ENCODE measurements at regions of chr6 and their contacts with region 1.

Region 1: GRCh38 chr6:130020907-130021629 is 2.7 kb downstream of the L3MBTL3 start:
- DNase-seq: peak; percentile 91
- ATAC-seq: peak; percentile 59
- H3K4me3 ChIP-seq: peak overlapping the region; percentile 70 to 77 (median 73)
- H3K4me3 Mint-ChIP-seq: peak overlapping the region; percentile 99
- H3K27ac ChIP-seq: peak overlapping the region; percentile 59 to 82
- H3K27ac Mint-ChIP-seq: peak overlapping the region; percentile 99
- H3K4me1 ChIP-seq: peaks cover 10% of the 10 kb centered on the region in 2 donors
- H3K4me1 Mint-ChIP-seq: peaks cover 29% of the 10 kb centered on the region
- H3K27me3 ChIP-seq: no peaks in the 10 kb centered on the region
- H3K27me3 Mint-ChIP-seq: no peaks in the 10 kb centered on the region
- CTCF ChIP-seq: peak; percentile 81

Region 2: GRCh38 chr6:129672881-129673643 is 348.0 kb before region 1 on chr6:
- CTCF ChIA-PET with region 1: interaction called, 6 read pairs
- POLR2A ChIA-PET with region 1: no interaction called
- intact Hi-C with region 1: loop called (anchors 2 kb)
- DNase-seq: no peak
- ATAC-seq: peak; percentile 32
- H3K4me3 ChIP-seq: no peak overlapping the region
- H3K4me3 Mint-ChIP-seq: peak overlapping the region; percentile 17
- H3K27ac ChIP-seq: peak overlapping the region in 1 of 2 donors; percentile 43
- H3K27ac Mint-ChIP-seq: peak overlapping the region; percentile 70
- H3K4me1 ChIP-seq: peaks cover 12 to 14% of the 10 kb centered on the region in 2 donors
- H3K4me1 Mint-ChIP-seq: peaks cover 21% of the 10 kb centered on the region
- H3K27me3 ChIP-seq: no peaks in the 10 kb centered on the region
- H3K27me3 Mint-ChIP-seq: no peaks in the 10 kb centered on the region
- CTCF ChIP-seq: no peak

Region 3: GRCh38 chr6:129748212-129748900 is 272.7 kb before region 1 on chr6:
- CTCF ChIA-PET with region 1: interaction called, 5 read pairs
- POLR2A ChIA-PET with region 1: no interaction called
- intact Hi-C with region 1: loop called (anchors 2 kb)
- DNase-seq: peak; percentile 78
- ATAC-seq: peak; percentile 90
- H3K4me3 ChIP-seq: peak overlapping the region in 3 of 5 experiments; percentile 24 to 42 (median 24)
- H3K4me3 Mint-ChIP-seq: peak overlapping the region; percentile 70
- H3K27ac ChIP-seq: peak overlapping the region; percentile 70 to 80
- H3K27ac Mint-ChIP-seq: peak overlapping the region; percentile 81
- H3K4me1 ChIP-seq: peaks cover 43 to 46% of the 10 kb centered on the region in 2 donors
- H3K4me1 Mint-ChIP-seq: peaks cover 58% of the 10 kb centered on the region
- H3K27me3 ChIP-seq: no peaks in the 10 kb centered on the region
- H3K27me3 Mint-ChIP-seq: no peaks in the 10 kb centered on the region
- CTCF ChIP-seq: no peak

Region 4: DNA sequence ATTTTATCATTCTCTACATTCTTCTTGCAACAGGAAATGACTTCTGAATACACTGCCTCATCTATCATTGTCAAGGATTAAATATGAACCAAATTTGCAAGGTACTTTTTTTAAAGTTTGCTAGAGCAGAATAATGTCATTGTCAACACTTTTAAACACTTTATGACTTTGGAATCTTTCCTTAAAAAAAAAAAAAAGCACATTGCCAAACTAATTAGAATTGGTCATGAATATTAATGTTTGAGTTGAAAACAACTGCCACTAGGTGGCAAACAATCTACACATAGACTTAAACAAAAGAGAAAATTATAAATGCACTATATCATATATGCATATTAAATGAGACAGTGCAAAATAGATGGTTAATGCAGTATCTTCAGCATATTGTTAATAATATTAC is 127.4 kb before region 1 on chr6:
- CTCF ChIA-PET with region 1: interaction called, 5 read pairs
- POLR2A ChIA-PET with region 1: no interaction called
- intact Hi-C with region 1: loop called (anchors 1 kb)
- DNase-seq: peak; percentile 28
- ATAC-seq: no peak
- H3K4me3 ChIP-seq: no peak overlapping the region
- H3K4me3 Mint-ChIP-seq: no peak overlapping the region
- H3K27ac ChIP-seq: no peak overlapping the region
- H3K27ac Mint-ChIP-seq: no peak overlapping the region
- H3K4me1 ChIP-seq: peaks cover 4 to 8% of the 10 kb centered on the region in 2 donors
- H3K4me1 Mint-ChIP-seq: peaks cover 22% of the 10 kb centered on the region
- H3K27me3 ChIP-seq: no peaks in the 10 kb centered on the region
- H3K27me3 Mint-ChIP-seq: no peaks in the 10 kb centered on the region
- CTCF ChIP-seq: peak; percentile 65

Region 5: GRCh38 chr6:130115036-130115435 is 94.0 kb after region 1 on chr6:
- CTCF ChIA-PET with region 1: no interaction called
- POLR2A ChIA-PET with region 1: no interaction called
- intact Hi-C with region 1: loop called (anchors 5 kb)
- DNase-seq: peak; percentile 77
- ATAC-seq: peak; percentile 90
- H3K4me3 ChIP-seq: peak overlapping the region in 2 of 5 experiments; percentile 9 to 20
- H3K4me3 Mint-ChIP-seq: peak overlapping the region; percentile 82
- H3K27ac ChIP-seq: peak overlapping the region; percentile 88 to 91
- H3K27ac Mint-ChIP-seq: peak overlapping the region; percentile 94
- H3K4me1 ChIP-seq: peaks cover 49 to 55% of the 10 kb centered on the region in 2 donors
- H3K4me1 Mint-ChIP-seq: peaks cover 75% of the 10 kb centered on the region
- H3K27me3 ChIP-seq: no peaks in the 10 kb centered on the region
- H3K27me3 Mint-ChIP-seq: no peaks in the 10 kb centered on the region
- CTCF ChIP-seq: no peak

Region 6: DNA sequence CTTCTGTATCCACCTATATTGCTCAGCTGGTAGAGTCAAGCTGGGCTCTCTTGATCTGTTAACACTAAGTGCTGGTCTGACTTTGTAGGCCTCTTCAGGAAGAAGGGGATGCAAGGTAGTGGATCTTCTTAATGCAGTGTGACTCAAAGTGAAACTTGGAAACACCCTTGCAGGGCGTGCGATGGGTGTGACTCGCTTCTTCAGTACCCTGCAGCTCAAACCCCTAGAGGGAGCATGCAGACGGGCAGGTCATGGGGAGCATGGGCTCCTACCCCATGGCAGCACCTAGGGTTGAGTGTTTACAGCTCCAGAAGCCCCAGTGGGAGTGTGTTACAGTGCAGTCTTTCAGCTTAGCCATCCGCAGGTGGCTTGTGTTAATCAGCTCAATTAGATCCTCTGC is 202.4 kb after region 1 on chr6:
- CTCF ChIA-PET with region 1: no interaction called
- POLR2A ChIA-PET with region 1: no interaction called
- intact Hi-C with region 1: no loop called
- DNase-seq: peak; percentile 74
- ATAC-seq: peak; percentile 96
- H3K4me3 ChIP-seq: no peak overlapping the region
- H3K4me3 Mint-ChIP-seq: peak overlapping the region; percentile 52
- H3K27ac ChIP-seq: peak overlapping the region; percentile 64 to 70
- H3K27ac Mint-ChIP-seq: peak overlapping the region; percentile 84
- H3K4me1 ChIP-seq: peaks cover 15 to 17% of the 10 kb centered on the region in 2 donors
- H3K4me1 Mint-ChIP-seq: peaks cover 16% of the 10 kb centered on the region
- H3K27me3 ChIP-seq: no peaks in the 10 kb centered on the region
- H3K27me3 Mint-ChIP-seq: no peaks in the 10 kb centered on the region
- CTCF ChIP-seq: peak; percentile 8